HepG2 (cell line): ENCODE measurements at regions of chr14 and their contacts with region 1.

Region 1: DNA sequence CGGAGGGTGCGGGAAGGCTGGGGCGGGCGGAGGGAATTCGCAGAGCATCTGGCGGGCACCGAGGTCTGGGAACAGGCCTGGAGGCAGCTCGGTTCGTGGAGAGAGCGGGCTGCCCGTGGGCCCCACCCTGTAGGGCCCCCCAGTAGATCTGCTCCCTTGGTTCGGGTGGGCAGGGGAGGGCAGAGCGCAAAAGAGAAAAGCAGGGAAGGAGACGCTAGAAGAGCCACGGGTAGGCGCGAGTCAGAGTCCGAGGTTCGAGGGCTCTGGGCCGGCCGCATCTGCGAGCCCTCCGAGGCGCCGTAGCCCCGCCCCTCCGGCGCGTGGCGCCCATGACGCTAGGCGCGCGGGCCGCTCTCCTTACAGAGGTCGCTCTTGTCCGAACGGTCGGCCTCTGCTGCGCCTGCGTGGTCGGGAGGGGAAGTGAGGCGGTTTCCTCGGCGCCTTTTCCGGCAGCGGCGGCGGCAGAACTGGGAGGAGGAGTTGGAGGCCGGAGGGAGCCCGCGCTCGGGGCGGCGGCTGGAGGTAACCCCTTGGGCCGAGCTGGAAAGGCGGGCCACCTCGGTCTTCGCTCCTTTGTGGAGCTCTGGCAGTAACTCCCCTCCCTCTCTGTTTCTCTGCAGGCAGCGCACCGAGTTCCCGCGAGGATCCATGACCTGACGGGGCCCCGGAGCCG is at the start of gene ARF6:
- DNase-seq: peak; percentile 93
- ATAC-seq: peak; percentile 93
- H3K4me3 ChIP-seq: peak within 1 kb of the TSS; percentile 95 to 99 (median 97)
- H3K27ac ChIP-seq: peak within 1 kb of the TSS; percentile 98
- H3K4me1 ChIP-seq: peaks cover 29% of the 10 kb centered on the region
- H3K27me3 ChIP-seq: no peaks in the 10 kb centered on the region
- CTCF ChIP-seq: peak; percentile 64
- EP300 ChIP-seq: peak in 1 of 2 experiments; percentile 17; a peak in 1 of 4 replicates
- POLR2A ChIP-seq: peak; percentile 95 to 96
- RAD21 ChIP-seq: peak; percentile 57; the same call in 1 of the 2 replicates
- total RNA-seq, gene ARF6: 31.9 and 36.1 TPM in 2 replicates

Region 2: DNA sequence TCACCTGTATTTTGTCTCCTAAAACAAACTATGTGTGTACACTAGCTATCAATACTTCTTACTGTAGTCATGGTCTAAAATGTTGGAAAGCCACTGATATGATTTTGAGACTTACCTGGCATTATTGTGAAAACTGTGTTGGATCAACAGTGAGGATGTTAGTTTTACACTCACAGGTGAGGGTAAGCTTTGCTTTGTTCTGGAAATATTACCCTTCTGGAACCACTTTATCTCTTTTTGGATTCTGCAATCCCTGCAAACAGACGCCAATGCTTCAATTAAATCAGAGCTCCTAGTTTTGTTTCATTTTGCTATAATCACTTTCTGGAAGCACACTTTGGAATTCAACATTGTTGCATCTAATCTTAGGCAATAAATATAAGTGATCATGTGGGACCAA is 529.9 kb before region 1 on chr14:
- CTCF ChIA-PET with region 1: no interaction called
- POLR2A ChIA-PET with region 1: no interaction called
- in situ Hi-C with region 1: no loop called
- intact Hi-C with region 1: no loop called
- DNase-seq: no peak
- ATAC-seq: no peak
- H3K4me3 ChIP-seq: no peak overlapping the region
- H3K27ac ChIP-seq: no peak overlapping the region
- H3K4me1 ChIP-seq: peaks cover 34% of the 10 kb centered on the region
- H3K27me3 ChIP-seq: no peaks in the 10 kb centered on the region
- CTCF ChIP-seq: no peak
- EP300 ChIP-seq: no peak
- POLR2A ChIP-seq: no peak
- RAD21 ChIP-seq: no peak

Region 3: GRCh38 chr14:49879683-49880204 is 13.0 kb before region 1 on chr14:
- CTCF ChIA-PET with region 1: no interaction called
- POLR2A ChIA-PET with region 1: interaction called, 13 read pairs
- in situ Hi-C with region 1: no loop called
- intact Hi-C with region 1: no loop called
- DNase-seq: peak; percentile 80
- ATAC-seq: peak; percentile 95
- H3K4me3 ChIP-seq: peak overlapping the region in 1 of 3 experiments; percentile 44; a peak in 2 of 6 replicates
- H3K27ac ChIP-seq: no peak overlapping the region
- H3K4me1 ChIP-seq: peaks cover 32% of the 10 kb centered on the region
- H3K27me3 ChIP-seq: no peaks in the 10 kb centered on the region; a peak in 1 of 5 replicates
- CTCF ChIP-seq: peak; percentile 87
- EP300 ChIP-seq: no peak
- POLR2A ChIP-seq: no peak
- RAD21 ChIP-seq: peak; percentile 72

Region 4: DNA sequence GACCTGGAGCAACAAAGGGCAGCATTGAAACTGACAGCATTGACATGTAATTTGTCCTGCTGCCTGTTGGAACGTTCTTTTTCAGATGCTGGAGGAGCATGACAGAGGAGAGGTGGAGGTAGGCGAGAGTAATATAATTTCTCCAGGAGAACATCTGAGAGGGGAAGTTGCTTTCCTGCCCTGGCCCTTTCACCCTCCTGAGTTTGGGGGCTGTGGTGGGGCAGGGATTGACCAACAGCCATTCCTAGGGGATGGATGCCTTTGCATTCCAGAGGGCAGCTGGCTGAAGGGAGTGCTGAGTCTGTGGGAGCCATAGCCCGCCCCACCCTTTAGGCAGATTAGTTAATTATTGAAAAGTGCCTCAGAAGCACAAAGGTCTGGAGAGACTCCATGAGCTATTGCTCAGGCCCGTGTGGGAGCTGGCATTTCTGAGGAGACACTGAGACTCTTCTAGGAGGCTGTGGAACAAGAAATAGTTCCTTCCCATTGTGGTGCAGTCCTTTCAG is 73.6 kb after region 1 on chr14:
- CTCF ChIA-PET with region 1: no interaction called
- POLR2A ChIA-PET with region 1: interaction called, 9 read pairs
- in situ Hi-C with region 1: no loop called
- intact Hi-C with region 1: loop called (anchors 5 kb)
- DNase-seq: peak; percentile 84
- ATAC-seq: peak; percentile 100
- H3K4me3 ChIP-seq: peak overlapping the region; percentile 18 to 45 (median 40); a peak in 5 of 6 replicates
- H3K27ac ChIP-seq: peak overlapping the region; percentile 86
- H3K4me1 ChIP-seq: peaks cover 68% of the 10 kb centered on the region
- H3K27me3 ChIP-seq: no peaks in the 10 kb centered on the region
- CTCF ChIP-seq: no peak
- EP300 ChIP-seq: no peak
- POLR2A ChIP-seq: peak; percentile 61 to 64
- RAD21 ChIP-seq: no peak

Region 5: GRCh38 chr14:49986340-49987014 is 93.7 kb after region 1 on chr14:
- CTCF ChIA-PET with region 1: no interaction called
- POLR2A ChIA-PET with region 1: interaction called, 5 read pairs
- in situ Hi-C with region 1: no loop called
- intact Hi-C with region 1: loop called (anchors 2 kb)
- DNase-seq: peak; percentile 52
- ATAC-seq: peak; percentile 55
- H3K4me3 ChIP-seq: peak overlapping the region; percentile 24 to 48 (median 36); a peak in 4 of 6 replicates
- H3K27ac ChIP-seq: peak overlapping the region; percentile 98
- H3K4me1 ChIP-seq: peaks cover 73% of the 10 kb centered on the region
- H3K27me3 ChIP-seq: no peaks in the 10 kb centered on the region
- CTCF ChIP-seq: no peak
- EP300 ChIP-seq: no peak
- POLR2A ChIP-seq: no peak
- RAD21 ChIP-seq: no peak

Region 6: GRCh38 chr14:50010752-50011151 is 118.0 kb after region 1 on chr14:
- CTCF ChIA-PET with region 1: no interaction called
- POLR2A ChIA-PET with region 1: no interaction called
- in situ Hi-C with region 1: no loop called
- intact Hi-C with region 1: no loop called
- DNase-seq: no peak
- ATAC-seq: no peak
- H3K4me3 ChIP-seq: no peak overlapping the region
- H3K27ac ChIP-seq: no peak overlapping the region
- H3K4me1 ChIP-seq: peaks cover 52% of the 10 kb centered on the region
- H3K27me3 ChIP-seq: no peaks in the 10 kb centered on the region
- CTCF ChIP-seq: no peak
- EP300 ChIP-seq: no peak
- POLR2A ChIP-seq: no peak
- RAD21 ChIP-seq: no peak

Region 7: GRCh38 chr14:50070840-50071548 is 178.2 kb after region 1 on chr14:
- CTCF ChIA-PET with region 1: no interaction called
- POLR2A ChIA-PET with region 1: no interaction called
- in situ Hi-C with region 1: no loop called
- intact Hi-C with region 1: no loop called
- DNase-seq: no peak
- ATAC-seq: no peak
- H3K4me3 ChIP-seq: no peak overlapping the region
- H3K27ac ChIP-seq: no peak overlapping the region
- H3K4me1 ChIP-seq: peaks cover 21% of the 10 kb centered on the region
- H3K27me3 ChIP-seq: no peaks in the 10 kb centered on the region
- CTCF ChIP-seq: no peak
- EP300 ChIP-seq: no peak
- POLR2A ChIP-seq: no peak
- RAD21 ChIP-seq: no peak